Kidney (tissue), 22 donors: ENCODE measurements at regions of chr12 and their contacts with region 1.

Region 1: GRCh38 chr12:57309420-57309819 is 58.4 kb upstream of the STAC3 start:
- DNase-seq: no peak
- H3K4me3 ChIP-seq: no peak overlapping the region
- H3K27ac ChIP-seq: peak overlapping the region in 1 of 2 donors; percentile 9
- H3K4me1 ChIP-seq: no peaks in the 10 kb centered on the region
- H3K27me3 ChIP-seq: no peaks in the 10 kb centered on the region
- CTCF ChIP-seq: no peak

Region 2: GRCh38 chr12:57205933-57206330 is 103.5 kb before region 1 on chr12:
- intact Hi-C with region 1: no loop called
- DNase-seq: no peak
- H3K4me3 ChIP-seq: no peak overlapping the region
- H3K27ac ChIP-seq: no peak overlapping the region
- H3K4me1 ChIP-seq: no peaks in the 10 kb centered on the region
- H3K27me3 ChIP-seq: no peaks in the 10 kb centered on the region
- CTCF ChIP-seq: no peak

Region 3: DNA sequence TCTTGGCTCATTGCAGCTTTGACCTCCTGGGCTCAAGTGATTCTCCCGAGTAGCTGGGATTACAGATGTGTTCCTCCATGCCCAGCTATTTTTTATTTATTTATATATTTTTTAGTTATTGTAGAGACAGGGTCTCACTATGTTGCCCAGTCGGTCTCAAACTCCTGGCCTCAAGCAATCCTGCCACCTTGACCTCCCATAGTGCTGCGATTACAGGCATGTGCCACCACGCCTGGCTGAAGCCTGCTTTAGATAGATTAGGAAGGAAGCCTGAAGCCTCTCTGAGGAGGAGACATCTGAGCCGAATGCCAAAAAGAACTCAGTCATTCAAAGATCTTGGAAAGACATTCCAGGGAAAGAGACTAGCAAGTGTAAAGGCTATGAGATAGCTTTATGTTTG is 135.3 kb after region 1 on chr12:
- intact Hi-C with region 1: loop called (anchors 5 kb)
- DNase-seq: no peak
- H3K4me3 ChIP-seq: no peak overlapping the region
- H3K27ac ChIP-seq: no peak overlapping the region
- H3K4me1 ChIP-seq: no peaks in the 10 kb centered on the region
- H3K27me3 ChIP-seq: no peaks in the 10 kb centered on the region
- CTCF ChIP-seq: no peak